CD4-positive, alpha-beta memory T cell (primary cell): ENCODE measurements at regions of chr9 and their contacts with region 1.

Region 1: DNA sequence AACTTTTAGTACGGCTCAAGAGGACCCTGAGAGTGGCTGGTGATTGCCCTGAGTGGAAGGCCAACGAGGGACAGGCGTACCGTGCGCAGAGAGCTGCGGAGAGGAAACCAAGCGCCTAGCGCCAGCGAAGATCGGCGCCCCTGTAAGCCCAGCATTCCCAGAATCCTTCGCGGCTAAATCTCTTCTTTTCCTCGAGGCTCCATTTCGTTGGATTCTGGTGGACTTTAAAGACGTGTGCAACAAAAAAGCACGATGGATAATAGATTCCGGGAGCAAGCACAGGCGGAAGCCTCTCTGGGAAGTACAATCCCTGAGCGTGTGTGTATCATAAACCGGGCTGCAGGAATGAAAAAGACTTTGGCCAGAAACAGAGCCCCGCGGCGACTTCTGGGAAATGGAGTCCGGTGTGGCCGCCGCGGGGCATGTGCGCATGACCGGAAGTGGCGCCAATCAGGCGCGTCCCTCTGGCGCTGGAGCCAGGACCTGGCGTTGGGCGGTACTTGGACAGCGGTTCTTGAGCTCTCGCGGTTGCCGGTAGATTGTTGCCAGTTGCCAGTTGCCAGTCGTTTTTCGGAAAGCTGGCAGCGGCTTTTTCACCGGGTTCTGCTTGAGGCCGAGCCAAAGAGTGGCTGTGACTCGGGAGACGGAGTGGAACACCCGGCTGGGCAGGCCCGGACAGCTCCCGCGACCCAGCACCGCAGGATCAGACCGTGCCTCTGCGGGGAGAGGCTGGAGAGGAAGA is at the start of gene ZNF79:
- DNase-seq: peak; percentile 87 to 90 (median 89)
- H3K4me3 ChIP-seq: peak within 1 kb of the TSS; percentile 87 to 92
- H3K4me3 Mint-ChIP-seq: peak within 1 kb of the TSS; percentile 97 to 100 (median 99)
- H3K27ac ChIP-seq: peak within 1 kb of the TSS; percentile 80
- H3K27ac Mint-ChIP-seq: peak within 1 kb of the TSS; percentile 94 to 99 (median 96)
- H3K4me1 ChIP-seq: peaks cover 46% of the 10 kb centered on the region
- H3K4me1 Mint-ChIP-seq: peaks cover 20 to 60% (median 38%) of the 10 kb centered on the region in 4 donors
- H3K27me3 ChIP-seq: no peaks in the 10 kb centered on the region
- H3K27me3 Mint-ChIP-seq: no peaks in the 10 kb centered on the region
- total RNA-seq, gene ZNF79: 22.2 to 22.5 TPM

Region 2: DNA sequence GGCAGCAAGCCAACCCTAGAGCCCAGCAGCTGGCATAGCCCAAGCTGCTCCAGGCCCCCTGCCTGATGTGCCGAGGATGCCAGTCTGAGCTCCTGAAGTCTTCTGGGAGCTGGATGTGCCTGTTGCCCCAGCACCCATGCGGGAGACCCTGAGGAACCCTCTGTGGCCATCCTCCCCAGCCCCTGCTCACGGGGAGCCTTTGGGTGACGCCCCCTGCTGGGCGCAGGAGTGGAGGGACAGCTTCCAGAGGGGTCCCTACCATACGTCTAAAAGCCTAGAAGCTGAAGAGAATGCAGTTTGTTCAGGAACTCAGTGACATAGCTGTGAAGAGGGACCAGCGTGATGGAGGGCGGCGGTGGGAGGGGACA is 1130.6 kb before region 1 on chr9:
- CTCF ChIA-PET with region 1: no interaction called
- POLR2A ChIA-PET with region 1: no interaction called
- intact Hi-C with region 1: no loop called
- DNase-seq: no peak
- H3K4me3 ChIP-seq: no peak overlapping the region
- H3K4me3 Mint-ChIP-seq: no peak overlapping the region
- H3K27ac ChIP-seq: no peak overlapping the region
- H3K27ac Mint-ChIP-seq: no peak overlapping the region
- H3K4me1 ChIP-seq: no peaks in the 10 kb centered on the region
- H3K4me1 Mint-ChIP-seq: no peaks in the 10 kb centered on the region
- H3K27me3 ChIP-seq: no peaks in the 10 kb centered on the region
- H3K27me3 Mint-ChIP-seq: peaks cover 9% of the 10 kb centered on the region in 2 donors

Region 3: GRCh38 chr9:127214421-127215267 is 209.5 kb before region 1 on chr9:
- CTCF ChIA-PET with region 1: interaction called, 3 read pairs
- POLR2A ChIA-PET with region 1: interaction called, 5 read pairs
- intact Hi-C with region 1: loop called (anchors 2 kb)
- DNase-seq: peak; percentile 51 to 71 (median 55)
- H3K4me3 ChIP-seq: no peak overlapping the region
- H3K4me3 Mint-ChIP-seq: no peak overlapping the region
- H3K27ac ChIP-seq: no peak overlapping the region
- H3K27ac Mint-ChIP-seq: peak overlapping the region in 1 of 7 donors; percentile 20
- H3K4me1 ChIP-seq: no peaks in the 10 kb centered on the region
- H3K4me1 Mint-ChIP-seq: peaks cover 0 to 6% (median 2%) of the 10 kb centered on the region in 4 donors
- H3K27me3 ChIP-seq: no peaks in the 10 kb centered on the region
- H3K27me3 Mint-ChIP-seq: peaks cover 0 to 1% of the 10 kb centered on the region in 2 donors

Region 4: GRCh38 chr9:127224178-127224882 is 199.8 kb before region 1 on chr9:
- CTCF ChIA-PET with region 1: interaction called, 4 read pairs
- POLR2A ChIA-PET with region 1: interaction called, 4 read pairs
- intact Hi-C with region 1: loop called (anchors 1 kb)
- DNase-seq: peak; percentile 86 to 90 (median 87)
- H3K4me3 ChIP-seq: peak overlapping the region in 1 of 2 donors; percentile 53
- H3K4me3 Mint-ChIP-seq: peak overlapping the region; percentile 77 to 90 (median 87)
- H3K27ac ChIP-seq: no peak overlapping the region
- H3K27ac Mint-ChIP-seq: peak overlapping the region; percentile 79 to 96 (median 93)
- H3K4me1 ChIP-seq: peaks cover 35% of the 10 kb centered on the region
- H3K4me1 Mint-ChIP-seq: peaks cover 23 to 48% (median 33%) of the 10 kb centered on the region in 4 donors
- H3K27me3 ChIP-seq: no peaks in the 10 kb centered on the region
- H3K27me3 Mint-ChIP-seq: peaks cover 0 to 6% of the 10 kb centered on the region in 2 donors

Region 5: GRCh38 chr9:127360829-127361228 is 63.3 kb before region 1 on chr9:
- CTCF ChIA-PET with region 1: no interaction called
- POLR2A ChIA-PET with region 1: no interaction called
- intact Hi-C with region 1: no loop called
- DNase-seq: no peak
- H3K4me3 ChIP-seq: no peak overlapping the region
- H3K4me3 Mint-ChIP-seq: no peak overlapping the region
- H3K27ac ChIP-seq: no peak overlapping the region
- H3K27ac Mint-ChIP-seq: no peak overlapping the region
- H3K4me1 ChIP-seq: no peaks in the 10 kb centered on the region
- H3K4me1 Mint-ChIP-seq: no peaks in the 10 kb centered on the region
- H3K27me3 ChIP-seq: no peaks in the 10 kb centered on the region
- H3K27me3 Mint-ChIP-seq: peaks cover 0 to 4% of the 10 kb centered on the region in 2 donors

Region 6: GRCh38 chr9:127388037-127388855 is 35.9 kb before region 1 on chr9:
- CTCF ChIA-PET with region 1: no interaction called
- POLR2A ChIA-PET with region 1: no interaction called
- intact Hi-C with region 1: loop called (anchors 1 kb)
- DNase-seq: peak; percentile 90 to 95 (median 93)
- H3K4me3 ChIP-seq: no peak overlapping the region
- H3K4me3 Mint-ChIP-seq: peak overlapping the region in 6 of 8 donors; percentile 40 to 69 (median 54)
- H3K27ac ChIP-seq: no peak overlapping the region
- H3K27ac Mint-ChIP-seq: peak overlapping the region; percentile 39 to 93 (median 82)
- H3K4me1 ChIP-seq: peaks cover 23% of the 10 kb centered on the region
- H3K4me1 Mint-ChIP-seq: peaks cover 17 to 18% (median 18%) of the 10 kb centered on the region in 4 donors
- H3K27me3 ChIP-seq: peaks cover 66% of the 10 kb centered on the region
- H3K27me3 Mint-ChIP-seq: peaks cover 56 to 65% of the 10 kb centered on the region in 2 donors

Region 7: GRCh38 chr9:127396808-127397497 is 27.2 kb before region 1 on chr9 and contains the start of gene SLC2A8:
- CTCF ChIA-PET with region 1: no interaction called
- POLR2A ChIA-PET with region 1: interaction called, 6 read pairs
- intact Hi-C with region 1: loop called (anchors 2 kb)
- DNase-seq: peak; percentile 90 to 97 (median 95)
- H3K4me3 ChIP-seq: peak within 1 kb of the TSS; percentile 3 to 45
- H3K4me3 Mint-ChIP-seq: peak within 1 kb of the TSS; percentile 57 to 87 (median 69)
- H3K27ac ChIP-seq: no peak within 1 kb of the TSS
- H3K27ac Mint-ChIP-seq: peak within 1 kb of the TSS in 3 of 7 donors; percentile 13 to 86 (median 65)
- H3K4me1 ChIP-seq: peaks cover 19% of the 10 kb centered on the region
- H3K4me1 Mint-ChIP-seq: peaks cover 5 to 23% (median 13%) of the 10 kb centered on the region in 4 donors
- H3K27me3 ChIP-seq: peaks cover 50% of the 10 kb centered on the region
- H3K27me3 Mint-ChIP-seq: peaks cover 43 to 44% of the 10 kb centered on the region in 2 donors
- total RNA-seq, gene SLC2A8: 2.1 to 2.3 TPM